ENCODE measurements at regions of chr11 and their contacts with region 1.

Region 1: GRCh38 chr11:76152086-76152681 is 54.1 kb downstream of the WNT11 start:
- H3K4me3 ChIP-seq: no peak overlapping the region
- H3K27ac ChIP-seq: no peak overlapping the region
- H3K4me1 ChIP-seq: no peaks in the 10 kb centered on the region
- CTCF ChIP-seq: peak; percentile 87

Region 2: DNA sequence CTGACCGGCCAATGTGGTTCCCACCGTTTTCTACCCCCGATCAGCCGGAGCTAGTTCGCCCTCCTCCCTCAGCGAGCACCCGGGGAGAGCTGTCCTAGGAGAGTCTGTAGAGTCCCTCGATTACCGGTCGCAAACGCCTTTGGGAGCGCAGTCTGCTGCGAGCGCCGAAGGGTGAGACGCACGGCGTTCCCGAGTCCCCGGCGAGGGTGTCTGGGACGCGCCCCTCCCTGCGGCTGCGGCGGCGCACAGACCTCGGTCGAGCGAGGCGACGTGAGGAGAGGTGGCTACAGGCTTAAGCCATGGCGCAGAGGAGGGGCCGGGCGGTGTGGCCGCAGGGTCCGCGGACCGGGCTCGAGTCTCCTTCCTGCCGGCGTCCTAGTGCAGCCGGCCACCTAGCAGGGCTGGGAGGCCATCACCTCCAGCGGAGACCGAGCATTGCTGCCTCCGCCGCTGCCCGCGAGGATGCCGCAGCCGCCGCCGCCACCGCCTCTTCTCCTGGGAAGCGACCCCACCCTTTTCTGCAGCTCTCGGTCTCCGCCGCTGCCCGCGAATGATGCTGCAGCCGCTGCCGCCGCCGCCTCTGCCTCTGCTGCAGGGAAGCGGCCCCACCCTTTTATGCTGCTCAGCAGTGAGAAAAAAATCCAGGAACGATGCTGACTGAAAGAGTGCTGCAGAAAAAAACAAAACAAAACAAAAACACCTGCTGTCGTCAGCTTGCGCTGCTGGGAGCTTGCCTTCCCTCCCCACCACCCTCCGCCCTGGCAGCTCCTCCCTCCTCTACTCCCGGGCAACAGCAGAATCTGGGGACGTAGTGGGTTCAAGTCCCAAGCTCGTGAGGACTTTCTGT is 483.5 kb before region 1 on chr11 and contains the start of gene MAP6:
- CTCF ChIA-PET with region 1: no interaction called
- POLR2A ChIA-PET with region 1: interaction called, 10 read pairs
- H3K4me3 ChIP-seq: peak within 1 kb of the TSS; percentile 41
- H3K27ac ChIP-seq: peak within 1 kb of the TSS; percentile 20; the same call in 1 of the 2 replicates
- H3K4me1 ChIP-seq: no peaks in the 10 kb centered on the region
- CTCF ChIP-seq: no peak

Region 3: GRCh38 chr11:75896843-75897419 is 255.3 kb before region 1 on chr11:
- CTCF ChIA-PET with region 1: interaction called, 86 read pairs
- POLR2A ChIA-PET with region 1: interaction called, 3 read pairs
- H3K4me3 ChIP-seq: no peak overlapping the region
- H3K27ac ChIP-seq: no peak overlapping the region
- H3K4me1 ChIP-seq: no peaks in the 10 kb centered on the region
- CTCF ChIP-seq: no peak

Region 4: DNA sequence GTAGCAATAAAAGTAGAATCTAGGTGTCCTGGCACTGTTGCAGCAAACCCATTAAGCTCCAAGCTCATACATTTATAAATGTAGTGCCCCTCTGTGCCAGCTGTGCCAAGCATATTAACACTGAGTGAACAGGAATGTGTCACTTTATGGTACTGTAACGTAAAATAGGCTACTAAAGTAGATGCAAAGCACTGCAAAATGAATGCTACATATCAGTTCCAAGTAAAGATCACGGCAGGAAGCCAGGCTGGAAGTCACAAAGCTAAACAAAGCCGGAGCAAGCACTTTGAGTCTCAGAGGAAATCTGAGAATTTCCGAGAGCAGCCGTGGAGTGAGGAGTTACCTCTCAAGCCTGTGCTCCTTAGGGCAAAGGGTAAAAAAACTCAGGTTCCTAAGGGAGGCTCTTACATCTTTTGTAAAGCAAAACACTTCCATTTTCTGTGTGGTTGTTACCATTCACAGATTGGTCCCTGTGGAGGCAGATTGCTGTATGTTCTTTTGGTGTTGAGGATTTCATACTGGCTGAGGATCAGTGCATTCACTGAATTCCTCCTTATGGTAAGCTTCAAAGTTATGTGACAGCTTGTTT is 31.6 kb before region 1 on chr11:
- CTCF ChIA-PET with region 1: interaction called, 20 read pairs
- POLR2A ChIA-PET with region 1: no interaction called
- H3K4me3 ChIP-seq: no peak overlapping the region
- H3K27ac ChIP-seq: no peak overlapping the region
- H3K4me1 ChIP-seq: no peaks in the 10 kb centered on the region
- CTCF ChIP-seq: no peak

Region 5: GRCh38 chr11:76131671-76132631 is 20.2 kb before region 1 on chr11:
- CTCF ChIA-PET with region 1: interaction called, 15 read pairs
- POLR2A ChIA-PET with region 1: interaction called, 3 read pairs
- H3K4me3 ChIP-seq: no peak overlapping the region
- H3K27ac ChIP-seq: no peak overlapping the region
- H3K4me1 ChIP-seq: peaks cover 9% of the 10 kb centered on the region
- CTCF ChIP-seq: no peak

Region 6: DNA sequence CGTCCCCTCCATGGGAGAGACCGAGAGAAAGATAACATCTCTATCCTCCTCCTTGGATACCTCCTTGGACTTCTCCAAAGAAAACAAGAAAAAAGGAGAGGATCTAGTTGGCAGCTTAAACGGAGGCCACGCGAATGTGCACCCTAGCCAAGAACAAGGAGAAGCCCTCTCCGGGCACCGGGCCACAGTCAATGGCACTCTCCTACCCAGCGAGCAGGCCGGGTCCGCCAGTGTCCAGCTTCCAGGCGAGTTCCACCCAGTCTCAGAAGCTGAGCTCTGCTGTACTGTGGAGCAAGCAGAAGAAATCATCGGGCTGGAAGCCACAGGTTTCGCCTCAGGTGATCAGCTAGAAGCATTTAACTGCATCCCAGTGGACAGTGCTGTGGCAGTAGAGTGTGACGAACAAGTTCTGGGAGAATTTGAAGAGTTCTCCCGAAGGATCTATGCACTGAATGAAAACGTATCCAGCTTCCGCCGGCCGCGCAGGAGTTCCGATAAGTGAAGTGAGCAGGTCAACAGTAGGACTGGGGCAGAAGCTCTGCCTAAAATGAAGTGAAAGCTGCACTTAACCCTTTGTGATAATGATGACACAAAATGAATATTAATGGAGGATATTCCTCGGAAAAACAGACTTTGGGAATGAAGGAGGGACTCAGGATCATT is 11.1 kb before region 1 on chr11:
- CTCF ChIA-PET with region 1: interaction called, 24 read pairs
- POLR2A ChIA-PET with region 1: interaction called, 5 read pairs
- H3K4me3 ChIP-seq: no peak overlapping the region
- H3K27ac ChIP-seq: no peak overlapping the region
- H3K4me1 ChIP-seq: no peaks in the 10 kb centered on the region
- CTCF ChIP-seq: no peak

Region 7: DNA sequence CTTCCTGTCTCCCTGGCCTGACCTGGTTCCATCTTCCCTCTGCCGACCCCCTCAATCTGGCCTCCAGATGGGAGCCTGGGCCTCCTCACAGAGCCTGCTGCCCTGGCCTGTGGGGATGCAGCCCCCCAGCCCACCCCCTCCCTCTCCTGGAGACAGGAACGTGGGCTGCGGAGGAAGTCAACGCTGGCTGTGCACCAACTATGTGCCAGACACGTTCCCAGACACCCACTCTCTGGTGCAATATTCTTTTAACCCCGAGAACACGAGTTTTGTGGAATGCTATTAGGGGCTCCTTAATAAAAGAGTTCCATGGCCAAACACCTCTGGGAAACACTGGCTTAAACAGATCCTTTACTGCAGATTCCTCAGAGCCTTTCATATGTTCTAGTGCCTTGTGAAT is 38.2 kb after region 1 on chr11:
- CTCF ChIA-PET with region 1: no interaction called
- POLR2A ChIA-PET with region 1: no interaction called
- H3K4me3 ChIP-seq: no peak overlapping the region
- H3K27ac ChIP-seq: no peak overlapping the region
- H3K4me1 ChIP-seq: no peaks in the 10 kb centered on the region
- CTCF ChIP-seq: no peak

Measured in HEK293 (cell line).